Endothelial cell of umbilical vein (primary cell): ENCODE measurements at regions of chr5 and their contacts with region 1.

Region 1: DNA sequence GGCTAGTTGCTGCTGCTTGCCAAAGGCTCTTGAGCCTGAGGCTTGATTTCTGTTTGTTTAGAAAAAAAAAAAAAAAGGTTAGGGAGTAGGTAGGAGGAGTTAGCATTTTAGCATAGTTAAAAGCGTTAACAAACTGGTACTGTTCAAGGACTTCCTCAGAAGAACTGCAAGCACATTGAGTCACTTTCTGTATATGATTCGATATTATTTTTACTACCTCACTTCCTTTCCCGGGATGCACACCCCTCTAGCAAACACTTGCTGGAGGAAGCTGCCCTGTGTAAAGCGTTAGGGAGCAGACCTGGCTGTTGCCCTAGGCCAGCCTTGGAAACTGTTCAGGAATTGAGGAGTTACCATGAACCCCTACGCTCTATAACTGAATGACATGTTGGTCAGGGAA is 15.7 kb upstream of the CEP120 start:
- DNase-seq: peak; percentile 72
- H3K4me3 ChIP-seq: no peak overlapping the region
- H3K27ac ChIP-seq: no peak overlapping the region
- H3K4me1 ChIP-seq: peaks cover 8% of the 10 kb centered on the region
- H3K27me3 ChIP-seq: no peaks in the 10 kb centered on the region
- CTCF ChIP-seq: no peak
- POLR2A ChIP-seq: no peak

Region 2: DNA sequence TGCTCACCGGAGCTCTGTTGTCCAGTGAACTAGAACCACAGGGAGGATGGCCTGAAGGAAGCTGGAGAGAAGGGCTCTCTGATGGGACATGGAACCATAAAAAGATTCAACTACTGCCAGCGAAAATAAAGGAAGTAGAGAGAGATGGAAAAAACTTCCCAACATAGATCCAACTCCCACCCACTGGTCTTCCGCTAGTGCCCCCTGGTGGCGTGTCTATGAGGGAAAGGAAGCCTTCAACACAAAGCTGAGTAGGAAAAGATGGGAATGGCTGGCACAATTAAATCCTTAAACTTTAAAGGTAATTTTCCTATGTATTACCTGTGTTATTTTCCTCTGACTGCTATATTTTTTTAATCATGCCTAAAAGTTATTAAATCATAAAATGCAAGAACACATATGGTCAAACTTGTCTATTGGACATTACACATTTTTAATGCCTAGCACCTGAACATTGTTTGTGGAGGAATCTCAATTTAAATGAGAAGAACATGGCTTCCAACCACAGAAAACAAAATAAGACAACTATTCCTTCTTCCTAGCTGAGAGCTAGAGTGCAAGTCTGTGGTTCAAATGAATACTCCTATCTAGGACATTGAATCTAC is 67.2 kb before region 1 on chr5:
- CTCF ChIA-PET with region 1: no interaction called
- POLR2A ChIA-PET with region 1: no interaction called
- dilution Hi-C with region 1: no loop called
- intact Hi-C with region 1: no loop called
- DNase-seq: no peak
- H3K4me3 ChIP-seq: no peak overlapping the region
- H3K27ac ChIP-seq: no peak overlapping the region
- H3K4me1 ChIP-seq: no peaks in the 10 kb centered on the region
- H3K27me3 ChIP-seq: no peaks in the 10 kb centered on the region
- CTCF ChIP-seq: peak; percentile 40 to 49
- POLR2A ChIP-seq: no peak

Region 3: GRCh38 chr5:123423278-123424149 is 15.4 kb before region 1 on chr5 and contains the start of gene CEP120:
- CTCF ChIA-PET with region 1: interaction called, 11 read pairs
- POLR2A ChIA-PET with region 1: interaction called, 3 read pairs
- dilution Hi-C with region 1: no loop called
- intact Hi-C with region 1: loop called (anchors 1 kb)
- DNase-seq: peak; percentile 100
- H3K4me3 ChIP-seq: peak within 1 kb of the TSS; percentile 81 to 94 (median 93)
- H3K27ac ChIP-seq: peak within 1 kb of the TSS; percentile 62
- H3K4me1 ChIP-seq: peaks cover 11% of the 10 kb centered on the region
- H3K27me3 ChIP-seq: no peaks in the 10 kb centered on the region
- CTCF ChIP-seq: peak; percentile 88
- POLR2A ChIP-seq: peak; percentile 82
- total RNA-seq, gene CEP120: 15.0 and 18.8 TPM in 2 replicates